GM12878 (cell line): ENCODE measurements at regions of chr2 and their contacts with region 1.

Region 1: DNA sequence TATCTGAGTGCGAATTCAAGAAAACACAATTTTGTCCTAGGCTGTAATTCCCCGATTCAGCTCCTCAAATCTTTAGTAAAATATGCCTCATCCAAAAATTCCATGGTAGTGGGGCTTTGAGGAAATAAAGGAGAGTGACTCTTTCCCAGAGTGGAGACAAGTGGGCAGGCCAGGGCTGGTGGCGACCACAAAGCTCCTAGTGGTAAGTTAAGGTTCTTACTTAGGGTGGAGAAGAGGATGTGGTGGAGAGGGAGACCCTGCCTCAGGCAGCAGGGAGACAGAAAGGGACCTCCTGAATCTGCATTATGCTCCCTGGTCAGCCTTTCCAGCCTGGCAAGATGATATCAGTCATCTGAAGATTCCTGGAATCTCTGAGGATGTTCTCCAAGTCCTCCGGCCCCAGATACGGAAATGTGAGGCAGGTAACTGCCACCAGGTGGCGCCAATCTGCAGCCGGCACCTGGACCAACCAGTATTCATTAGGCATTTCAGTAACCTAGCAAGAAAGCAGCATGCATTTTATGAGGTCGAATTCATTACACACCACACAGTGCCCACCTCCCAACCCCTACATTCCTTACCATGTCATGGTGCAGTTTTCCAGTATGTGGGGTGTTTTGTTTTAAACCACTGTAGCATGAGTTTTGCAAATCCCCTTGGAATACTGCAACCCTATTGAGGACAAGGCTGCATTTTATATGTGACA is 106.4 kb downstream of the POLE4 start:
- DNase-seq: no peak
- ATAC-seq: peak; percentile 91
- H3K4me3 ChIP-seq: no peak overlapping the region
- H3K27ac ChIP-seq: no peak overlapping the region
- H3K4me1 ChIP-seq: no peaks in the 10 kb centered on the region
- H3K27me3 ChIP-seq: no peaks in the 10 kb centered on the region
- CTCF ChIP-seq: peak; percentile 67 to 92 (median 89)
- EP300 ChIP-seq: no peak
- POLR2A ChIP-seq: no peak
- RAD21 ChIP-seq: peak; percentile 78

Region 2: GRCh38 chr2:75047992-75048625 is 16.7 kb before region 1 on chr2:
- CTCF ChIA-PET with region 1: interaction called, 114 read pairs
- POLR2A ChIA-PET with region 1: no interaction called
- RAD21 ChIA-PET with region 1: interaction called, 14 read pairs
- SMC1A ChIA-PET with region 1: interaction called, 92 read pairs
- in situ Hi-C with region 1: no loop called
- intact Hi-C with region 1: no loop called
- DNase-seq: no peak
- ATAC-seq: no peak
- H3K4me3 ChIP-seq: no peak overlapping the region
- H3K27ac ChIP-seq: no peak overlapping the region
- H3K4me1 ChIP-seq: peaks cover under 1% of the 10 kb centered on the region; the same call in 1 of the 2 replicates
- H3K27me3 ChIP-seq: no peaks in the 10 kb centered on the region
- CTCF ChIP-seq: no peak
- EP300 ChIP-seq: no peak
- POLR2A ChIP-seq: no peak
- RAD21 ChIP-seq: no peak

Region 3: DNA sequence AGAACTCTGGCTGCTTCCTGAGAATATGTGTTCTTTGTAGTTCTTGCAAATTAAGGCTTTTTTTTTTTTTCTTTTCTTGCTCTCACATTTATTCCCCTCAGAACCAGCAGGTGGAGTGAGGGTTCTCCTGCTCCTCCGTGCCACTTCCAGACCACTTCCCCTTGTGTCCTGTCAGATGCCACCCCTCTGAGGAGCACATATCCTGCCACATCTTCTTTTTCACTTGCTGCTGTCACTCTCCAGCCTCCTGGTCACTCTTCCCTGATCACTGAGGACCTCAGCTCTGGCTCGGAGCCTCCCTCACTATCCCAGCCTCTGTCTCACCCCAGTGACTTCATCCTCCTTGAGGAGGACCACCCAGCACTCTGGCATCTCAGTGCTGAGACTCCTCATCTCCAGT is 34.0 kb after region 1 on chr2:
- CTCF ChIA-PET with region 1: interaction called, 11 read pairs
- POLR2A ChIA-PET with region 1: no interaction called
- RAD21 ChIA-PET with region 1: no interaction called
- SMC1A ChIA-PET with region 1: interaction called, 4 read pairs
- in situ Hi-C with region 1: no loop called
- intact Hi-C with region 1: no loop called
- DNase-seq: no peak
- ATAC-seq: peak; percentile 87
- H3K4me3 ChIP-seq: no peak overlapping the region
- H3K27ac ChIP-seq: no peak overlapping the region
- H3K4me1 ChIP-seq: no peaks in the 10 kb centered on the region
- H3K27me3 ChIP-seq: no peaks in the 10 kb centered on the region
- CTCF ChIP-seq: peak; percentile 47 to 50 (median 48); a peak in 5 of 6 replicates
- EP300 ChIP-seq: no peak
- POLR2A ChIP-seq: no peak
- RAD21 ChIP-seq: peak; percentile 53

Region 4: DNA sequence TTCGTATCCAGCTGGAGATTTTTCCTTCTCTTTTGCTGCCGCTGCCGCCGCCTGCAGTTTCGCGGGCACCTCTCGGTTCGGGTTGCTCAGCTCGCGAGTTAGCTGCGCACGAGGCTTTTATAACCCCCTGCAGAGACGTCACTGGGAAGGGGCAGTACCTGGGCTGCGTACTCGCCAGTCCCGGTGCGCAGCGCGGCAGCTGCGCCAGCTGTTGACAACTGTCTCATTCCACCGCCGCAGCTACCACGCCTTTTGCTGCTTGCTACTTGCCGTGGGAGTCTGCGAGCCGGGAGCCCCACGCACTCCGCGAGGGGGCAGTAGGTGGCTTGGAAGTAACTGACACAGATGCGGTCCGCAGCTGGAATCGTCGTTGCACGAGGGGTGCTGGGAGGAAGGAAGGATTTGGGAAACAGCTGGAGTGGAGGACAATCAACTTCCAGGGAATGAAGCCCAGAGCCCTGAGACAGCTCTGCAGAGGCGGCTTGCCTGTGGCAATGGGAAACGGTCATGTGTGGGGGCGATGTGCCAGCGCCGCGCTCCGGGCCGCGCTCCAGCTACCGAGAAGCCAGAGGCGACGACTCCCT is 134.7 kb after region 1 on chr2 and contains the start of gene TACR1:
- CTCF ChIA-PET with region 1: interaction called, 10 read pairs
- POLR2A ChIA-PET with region 1: no interaction called
- RAD21 ChIA-PET with region 1: interaction called, 3 read pairs
- SMC1A ChIA-PET with region 1: interaction called, 5 read pairs
- in situ Hi-C with region 1: no loop called
- intact Hi-C with region 1: no loop called
- DNase-seq: peak; percentile 35
- ATAC-seq: peak; percentile 91
- H3K4me3 ChIP-seq: peak within 1 kb of the TSS; percentile 57
- H3K27ac ChIP-seq: no peak within 1 kb of the TSS
- H3K4me1 ChIP-seq: peaks cover 4% of the 10 kb centered on the region; the same call in 1 of the 2 replicates
- H3K27me3 ChIP-seq: peaks cover 5 to 11% of the 10 kb centered on the region in 2 experiments
- CTCF ChIP-seq: peak; percentile 56 to 69 (median 64)
- EP300 ChIP-seq: 0 out of 4 replicates have a peak, but pooled peaks of 1 of the 2 experiments have one; percentile 22
- POLR2A ChIP-seq: no peak
- RAD21 ChIP-seq: peak; percentile 73
- polyA plus RNA-seq, gene TACR1: 0.04 to 0.05 TPM